ENCODE measurements at regions of chr18 and their contacts with region 1.

Region 1: DNA sequence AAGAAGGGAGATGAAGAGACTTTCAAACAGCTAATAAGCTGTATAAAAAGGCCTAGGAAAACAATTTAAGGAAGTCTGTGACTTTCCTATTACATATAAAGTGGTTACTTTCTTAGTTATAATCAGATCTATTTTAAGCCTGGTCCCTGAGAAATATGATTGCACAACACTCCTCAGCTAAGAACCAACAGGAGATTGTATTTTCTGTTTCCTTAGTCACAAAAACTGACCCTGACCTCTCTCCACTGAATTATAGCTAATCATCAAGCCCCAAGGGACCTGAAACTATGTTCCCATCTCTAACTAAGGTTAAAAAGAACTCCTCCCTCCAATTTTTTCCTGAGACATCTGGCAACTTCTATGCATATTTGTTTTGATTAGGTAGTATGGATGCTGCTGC is 106.9 kb downstream of the ROCK1 start:
- DNase-seq: no peak
- ATAC-seq: peak; percentile 86 to 92

Region 2: GRCh38 chr18:20960735-20961134 is 44.0 kb before region 1 on chr18:
- intact Hi-C with region 1: no loop called
- DNase-seq: no peak
- ATAC-seq: no peak

Region 3: DNA sequence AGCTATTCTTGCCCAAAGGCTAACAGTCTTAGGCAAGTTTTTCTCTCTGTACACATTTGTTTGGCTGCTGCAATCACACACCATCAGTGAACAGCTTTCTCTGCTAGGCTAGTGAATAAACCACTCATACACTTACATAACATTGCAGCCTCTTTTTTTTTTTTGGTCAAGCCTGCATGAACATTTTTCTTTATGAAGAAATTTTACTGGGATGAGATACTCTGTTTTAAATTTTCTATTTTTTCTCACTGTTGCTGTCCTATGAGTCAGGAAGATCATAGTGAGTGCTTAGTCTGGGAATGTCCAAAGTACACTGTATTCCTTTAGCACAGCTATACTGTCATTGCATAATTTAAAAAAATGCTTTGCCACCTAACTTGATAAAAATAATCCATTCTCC is 48.4 kb after region 1 on chr18:
- intact Hi-C with region 1: loop called in 1 of 2 experiments (anchors 10 kb)
- DNase-seq: no peak
- ATAC-seq: peak; percentile 78 to 94

Region 4: GRCh38 chr18:21134898-21135297 is 130.2 kb after region 1 on chr18:
- intact Hi-C with region 1: loop called in 1 of 2 experiments (anchors 10 kb)
- DNase-seq: no peak
- ATAC-seq: peak in 1 of 2 donors; percentile 61

Region 5: DNA sequence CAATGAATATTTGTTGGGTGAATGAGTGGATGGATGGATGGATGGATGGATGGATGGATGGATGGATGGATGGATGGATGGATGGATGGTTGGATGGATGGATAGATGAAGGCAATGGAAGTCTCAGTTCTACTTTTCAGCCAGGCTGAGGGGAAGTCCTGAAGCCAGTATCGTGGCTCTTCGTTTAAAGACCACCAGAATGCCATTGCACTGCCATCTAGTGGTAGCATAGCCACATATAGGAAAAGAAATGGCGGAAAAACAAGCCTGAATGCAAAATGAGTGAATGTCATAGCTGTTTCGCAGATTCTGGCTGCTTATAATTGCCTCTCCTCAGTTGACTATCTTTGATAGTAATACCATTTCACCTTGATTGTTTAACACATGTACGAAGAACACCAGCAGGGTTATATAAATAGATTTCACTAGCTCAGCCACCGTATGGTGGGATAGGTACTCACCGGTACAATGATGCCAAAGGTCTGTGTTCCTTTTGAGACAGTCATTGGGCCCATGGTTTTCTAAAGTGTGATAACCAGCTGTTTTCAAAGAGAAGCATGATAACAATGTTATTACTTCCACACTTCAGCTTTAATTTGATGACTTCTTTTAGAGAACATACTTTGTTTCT is 175.0 kb after region 1 on chr18:
- intact Hi-C with region 1: loop called in 1 of 2 experiments (anchors 10 kb)
- DNase-seq: peak; percentile 48
- ATAC-seq: peak; percentile 50 to 67

Region 6: GRCh38 chr18:21203096-21203495 is 198.4 kb after region 1 on chr18:
- intact Hi-C with region 1: no loop called
- DNase-seq: no peak
- ATAC-seq: no peak

Measured in left cardiac atrium (tissue), 4 donors.